CD8-positive, alpha-beta T cell (primary cell): ENCODE measurements at regions of chr1 and their contacts with region 1.

Region 1: GRCh38 chr1:115980998-115981993 is 5.0 kb downstream of the SLC22A15 start:
- DNase-seq: peak in 4 of 9 experiments; percentile 27 to 54 (median 48)
- ATAC-seq: no peak
- H3K4me3 ChIP-seq: no peak overlapping the region
- H3K4me3 Mint-ChIP-seq: no peak overlapping the region
- H3K27ac ChIP-seq: no peak overlapping the region
- H3K27ac Mint-ChIP-seq: no peak overlapping the region
- H3K4me1 ChIP-seq: no peaks in the 10 kb centered on the region
- H3K4me1 Mint-ChIP-seq: peaks cover 4% of the 10 kb centered on the region
- H3K27me3 ChIP-seq: no peaks in the 10 kb centered on the region
- H3K27me3 Mint-ChIP-seq: peaks cover 25% of the 10 kb centered on the region
- CTCF ChIP-seq: peak; percentile 35

Region 2: GRCh38 chr1:115492019-115492595 is 489.2 kb before region 1 on chr1:
- CTCF ChIA-PET with region 1: no interaction called
- POLR2A ChIA-PET with region 1: no interaction called
- intact Hi-C with region 1: no loop called
- DNase-seq: no peak
- ATAC-seq: no peak
- H3K4me3 ChIP-seq: no peak overlapping the region
- H3K4me3 Mint-ChIP-seq: no peak overlapping the region
- H3K27ac ChIP-seq: no peak overlapping the region
- H3K27ac Mint-ChIP-seq: no peak overlapping the region
- H3K4me1 ChIP-seq: no peaks in the 10 kb centered on the region
- H3K4me1 Mint-ChIP-seq: no peaks in the 10 kb centered on the region
- H3K27me3 ChIP-seq: no peaks in the 10 kb centered on the region
- H3K27me3 Mint-ChIP-seq: no peaks in the 10 kb centered on the region
- CTCF ChIP-seq: no peak

Region 3: DNA sequence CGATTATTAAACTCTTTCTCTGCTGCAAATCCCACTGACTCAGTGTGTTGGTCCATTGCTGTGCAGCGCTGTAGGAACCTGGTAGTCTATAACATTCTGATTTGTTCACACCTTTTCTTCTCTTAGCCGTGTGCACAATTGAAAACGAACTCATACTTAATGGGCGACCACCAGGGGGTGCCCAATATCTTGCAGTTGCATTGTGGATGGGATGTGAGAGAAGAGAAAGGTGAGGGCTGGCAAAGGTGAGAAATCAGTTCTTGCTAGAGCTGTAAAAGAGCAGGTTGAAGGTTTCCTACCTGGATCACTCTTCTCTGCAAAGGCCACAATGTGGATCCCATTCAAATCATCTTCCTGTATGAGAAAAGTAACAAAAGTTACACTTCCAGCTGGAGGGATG is 263.8 kb before region 1 on chr1:
- CTCF ChIA-PET with region 1: interaction called, 3 read pairs
- POLR2A ChIA-PET with region 1: no interaction called
- intact Hi-C with region 1: loop called in 1 of 2 experiments (anchors 5 kb)
- DNase-seq: peak in 4 of 9 experiments; percentile 15 to 41 (median 24)
- ATAC-seq: no peak
- H3K4me3 ChIP-seq: no peak overlapping the region
- H3K4me3 Mint-ChIP-seq: no peak overlapping the region
- H3K27ac ChIP-seq: no peak overlapping the region
- H3K27ac Mint-ChIP-seq: no peak overlapping the region
- H3K4me1 ChIP-seq: no peaks in the 10 kb centered on the region
- H3K4me1 Mint-ChIP-seq: no peaks in the 10 kb centered on the region
- H3K27me3 ChIP-seq: no peaks in the 10 kb centered on the region
- H3K27me3 Mint-ChIP-seq: peaks cover 4% of the 10 kb centered on the region
- CTCF ChIP-seq: no peak

Region 4: DNA sequence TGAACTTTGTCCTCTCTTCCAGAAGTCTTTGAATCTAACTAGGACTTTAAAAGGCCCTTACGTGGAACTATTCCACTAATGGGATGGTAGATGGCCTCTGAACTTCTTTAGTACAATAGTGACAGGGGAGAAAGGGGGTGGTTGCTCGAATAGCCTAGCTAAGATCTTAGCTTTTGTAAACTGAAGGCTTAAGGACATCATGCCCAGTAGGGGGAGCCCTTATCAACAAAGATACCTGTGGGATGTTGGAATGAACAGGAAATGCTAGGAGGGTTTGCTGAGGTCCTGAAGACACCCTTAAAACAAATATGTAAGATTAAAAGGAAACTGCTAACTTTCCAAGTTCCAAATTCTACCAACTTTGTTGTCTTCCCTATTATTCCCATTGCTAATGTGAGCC is 173.6 kb before region 1 on chr1:
- CTCF ChIA-PET with region 1: interaction called, 6 read pairs
- POLR2A ChIA-PET with region 1: no interaction called
- intact Hi-C with region 1: loop called (anchors 1 to 2 kb)
- DNase-seq: peak in 6 of 9 experiments; percentile 24 to 69 (median 36)
- ATAC-seq: no peak
- H3K4me3 ChIP-seq: no peak overlapping the region
- H3K4me3 Mint-ChIP-seq: no peak overlapping the region
- H3K27ac ChIP-seq: no peak overlapping the region
- H3K27ac Mint-ChIP-seq: no peak overlapping the region
- H3K4me1 ChIP-seq: no peaks in the 10 kb centered on the region
- H3K4me1 Mint-ChIP-seq: peaks cover 2% of the 10 kb centered on the region
- H3K27me3 ChIP-seq: no peaks in the 10 kb centered on the region
- H3K27me3 Mint-ChIP-seq: peaks cover 6% of the 10 kb centered on the region
- CTCF ChIP-seq: peak; percentile 42

Region 5: DNA sequence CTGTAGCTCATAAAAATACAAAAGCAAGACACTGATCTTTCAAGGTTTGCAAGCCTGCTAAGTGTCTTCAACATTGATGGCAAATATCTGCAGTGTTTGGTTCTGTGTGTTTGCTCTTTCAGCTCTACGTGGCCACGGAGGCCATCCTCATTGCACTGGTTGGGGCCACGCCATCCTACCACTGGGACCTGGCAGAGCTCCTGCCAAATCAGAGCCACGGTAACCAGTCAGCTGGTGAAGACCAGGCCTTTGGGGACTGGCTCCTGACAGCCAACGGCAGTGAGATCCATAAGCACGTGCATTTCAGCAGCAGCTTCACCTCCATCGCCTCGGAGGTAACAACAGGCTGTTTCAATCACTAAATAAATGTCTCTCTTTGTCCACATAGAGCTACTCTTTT is 10.6 kb after region 1 on chr1:
- CTCF ChIA-PET with region 1: interaction called, 14 read pairs
- POLR2A ChIA-PET with region 1: no interaction called
- intact Hi-C with region 1: no loop called
- DNase-seq: peak in 1 of 9 experiments; percentile 25
- ATAC-seq: no peak
- H3K4me3 ChIP-seq: no peak overlapping the region
- H3K4me3 Mint-ChIP-seq: no peak overlapping the region
- H3K27ac ChIP-seq: no peak overlapping the region
- H3K27ac Mint-ChIP-seq: no peak overlapping the region
- H3K4me1 ChIP-seq: peaks cover 4% of the 10 kb centered on the region
- H3K4me1 Mint-ChIP-seq: peaks cover 12% of the 10 kb centered on the region
- H3K27me3 ChIP-seq: no peaks in the 10 kb centered on the region
- H3K27me3 Mint-ChIP-seq: peaks cover 3% of the 10 kb centered on the region
- CTCF ChIP-seq: no peak

Region 6: GRCh38 chr1:116001739-116002487 is 20.6 kb after region 1 on chr1:
- CTCF ChIA-PET with region 1: no interaction called
- POLR2A ChIA-PET with region 1: no interaction called
- intact Hi-C with region 1: no loop called
- DNase-seq: no peak
- ATAC-seq: no peak
- H3K4me3 ChIP-seq: no peak overlapping the region
- H3K4me3 Mint-ChIP-seq: no peak overlapping the region
- H3K27ac ChIP-seq: no peak overlapping the region
- H3K27ac Mint-ChIP-seq: no peak overlapping the region
- H3K4me1 ChIP-seq: peaks cover 12% of the 10 kb centered on the region
- H3K4me1 Mint-ChIP-seq: peaks cover 12% of the 10 kb centered on the region
- H3K27me3 ChIP-seq: no peaks in the 10 kb centered on the region
- H3K27me3 Mint-ChIP-seq: peaks cover 2% of the 10 kb centered on the region
- CTCF ChIP-seq: no peak

Region 7: DNA sequence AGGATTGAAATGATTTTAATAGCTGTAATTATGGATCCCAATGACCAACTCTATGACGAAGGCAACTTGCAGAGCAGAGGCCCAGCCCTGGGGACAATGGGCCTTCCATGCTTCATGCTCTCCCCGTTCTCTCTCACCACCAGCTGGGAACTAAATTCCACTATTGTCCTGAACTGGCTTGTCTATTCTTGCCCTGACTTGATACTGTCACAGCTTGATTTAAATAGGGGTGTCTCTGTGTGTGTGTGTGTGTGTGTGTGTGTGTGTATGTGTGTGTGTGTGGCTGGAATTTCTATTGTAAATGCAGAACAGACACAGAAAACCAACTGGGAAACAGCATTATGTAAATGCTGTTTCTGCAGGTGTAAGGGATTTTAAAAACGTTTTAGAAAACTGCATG is 52.0 kb after region 1 on chr1:
- CTCF ChIA-PET with region 1: no interaction called
- POLR2A ChIA-PET with region 1: no interaction called
- intact Hi-C with region 1: loop called in 1 of 2 experiments (anchors 1 kb)
- DNase-seq: no peak
- ATAC-seq: no peak
- H3K4me3 ChIP-seq: no peak overlapping the region
- H3K4me3 Mint-ChIP-seq: no peak overlapping the region
- H3K27ac ChIP-seq: no peak overlapping the region
- H3K27ac Mint-ChIP-seq: no peak overlapping the region
- H3K4me1 ChIP-seq: no peaks in the 10 kb centered on the region
- H3K4me1 Mint-ChIP-seq: no peaks in the 10 kb centered on the region
- H3K27me3 ChIP-seq: no peaks in the 10 kb centered on the region
- H3K27me3 Mint-ChIP-seq: peaks cover 6% of the 10 kb centered on the region
- CTCF ChIP-seq: no peak

Region 8: GRCh38 chr1:116529199-116529616 is 547.9 kb after region 1 on chr1:
- CTCF ChIA-PET with region 1: no interaction called
- POLR2A ChIA-PET with region 1: no interaction called
- intact Hi-C with region 1: no loop called
- DNase-seq: no peak
- ATAC-seq: no peak
- H3K4me3 ChIP-seq: no peak overlapping the region
- H3K4me3 Mint-ChIP-seq: no peak overlapping the region
- H3K27ac ChIP-seq: no peak overlapping the region
- H3K27ac Mint-ChIP-seq: no peak overlapping the region
- H3K4me1 ChIP-seq: no peaks in the 10 kb centered on the region
- H3K4me1 Mint-ChIP-seq: no peaks in the 10 kb centered on the region
- H3K27me3 ChIP-seq: no peaks in the 10 kb centered on the region
- H3K27me3 Mint-ChIP-seq: no peaks in the 10 kb centered on the region
- CTCF ChIP-seq: no peak